GM13976 (cell line): ENCODE measurements at regions of chr20 and their contacts with region 1.

Region 1: DNA sequence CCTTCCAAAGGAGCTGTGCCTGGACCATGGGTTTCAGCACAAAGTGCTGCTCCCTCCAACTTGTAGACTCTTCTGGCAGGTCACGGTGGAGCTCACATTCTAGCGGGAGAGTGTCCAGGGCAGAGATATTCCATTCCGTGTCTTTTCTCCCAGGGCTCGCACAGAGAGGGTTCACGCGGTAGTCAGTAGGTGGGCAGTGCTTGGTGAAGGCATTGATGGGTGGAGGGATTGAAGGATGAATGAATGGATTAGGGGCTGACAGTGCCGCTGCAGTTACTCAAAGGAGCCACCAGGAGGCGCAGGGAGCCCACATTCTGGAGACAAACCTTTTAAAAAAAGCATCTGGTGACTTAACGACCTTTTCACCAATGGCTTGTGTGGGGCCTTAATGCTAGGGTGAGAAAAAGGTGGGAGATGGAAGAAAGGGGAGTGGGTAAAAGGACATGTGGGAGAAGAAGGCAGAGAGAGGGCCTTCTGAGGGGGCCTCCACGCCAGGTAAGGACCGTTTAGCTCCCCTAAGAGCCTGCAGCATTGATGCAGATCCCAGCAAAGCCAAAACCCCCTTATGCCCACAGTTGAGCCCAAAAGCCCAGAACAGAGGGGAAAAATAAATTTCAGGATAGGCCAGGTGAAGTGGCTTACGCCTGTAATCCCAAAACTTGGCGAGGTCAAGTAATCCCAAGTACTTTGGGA is 17.5 kb upstream of the FAM110A start:
- DNase-seq: peak; percentile 81
- CTCF ChIP-seq: peak; percentile 96

Region 2: DNA sequence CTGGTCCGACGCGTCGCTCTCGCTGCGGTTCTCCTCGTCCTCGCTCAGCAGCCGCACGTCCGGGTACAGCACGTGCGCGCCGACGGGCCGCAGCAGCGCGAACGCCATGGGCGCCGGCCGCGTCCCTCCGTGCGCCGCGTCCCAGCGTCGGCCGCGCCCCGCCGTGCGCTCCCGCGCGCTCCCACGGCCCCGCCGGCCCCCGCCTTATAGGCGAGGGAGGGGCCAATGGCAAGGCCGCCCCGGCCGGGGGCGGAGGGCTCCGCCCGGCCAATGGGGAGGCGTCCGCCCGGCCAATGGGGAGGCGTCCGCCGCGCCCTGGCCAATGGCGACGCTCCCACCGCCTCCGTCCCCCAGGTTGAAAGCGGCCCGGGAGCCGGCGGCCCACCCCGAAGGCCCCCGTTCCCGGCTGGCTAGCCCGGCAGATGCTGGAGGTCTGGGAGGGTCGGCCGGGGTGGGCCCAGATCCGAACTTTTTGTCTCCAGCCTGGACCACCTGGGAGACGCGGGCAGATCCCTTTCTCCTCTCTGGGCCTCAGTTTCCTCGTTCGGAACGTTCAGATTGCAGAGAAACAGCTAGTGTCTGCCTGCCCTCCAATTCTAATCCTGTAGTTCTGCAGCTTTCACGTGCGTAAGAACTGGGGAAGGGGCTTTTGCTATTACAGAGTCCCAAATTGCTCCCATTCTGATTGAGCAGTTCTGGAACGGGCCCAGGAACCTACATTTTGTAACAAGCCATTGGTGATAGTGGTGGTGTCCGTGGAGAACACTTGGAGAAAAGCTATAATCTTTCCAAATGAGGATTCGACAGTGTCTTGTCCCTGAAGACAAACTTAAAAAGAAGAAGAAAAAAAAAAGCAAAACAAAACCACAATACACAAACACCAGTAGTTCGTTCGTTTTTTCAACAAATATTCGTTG is 205.7 kb before region 1 on chr20 and contains the start of gene TCF15:
- in situ Hi-C with region 1: no loop called
- DNase-seq: peak; percentile 86
- CTCF ChIP-seq: no peak

Region 3: GRCh38 chr20:699811-700338 is 116.2 kb before region 1 on chr20:
- in situ Hi-C with region 1: no loop called
- DNase-seq: no peak
- CTCF ChIP-seq: no peak

Region 4: GRCh38 chr20:956330-956951 is 140.4 kb after region 1 on chr20:
- in situ Hi-C with region 1: loop called (anchors 5 kb)
- DNase-seq: peak; percentile 88
- CTCF ChIP-seq: peak; percentile 94

Region 5: DNA sequence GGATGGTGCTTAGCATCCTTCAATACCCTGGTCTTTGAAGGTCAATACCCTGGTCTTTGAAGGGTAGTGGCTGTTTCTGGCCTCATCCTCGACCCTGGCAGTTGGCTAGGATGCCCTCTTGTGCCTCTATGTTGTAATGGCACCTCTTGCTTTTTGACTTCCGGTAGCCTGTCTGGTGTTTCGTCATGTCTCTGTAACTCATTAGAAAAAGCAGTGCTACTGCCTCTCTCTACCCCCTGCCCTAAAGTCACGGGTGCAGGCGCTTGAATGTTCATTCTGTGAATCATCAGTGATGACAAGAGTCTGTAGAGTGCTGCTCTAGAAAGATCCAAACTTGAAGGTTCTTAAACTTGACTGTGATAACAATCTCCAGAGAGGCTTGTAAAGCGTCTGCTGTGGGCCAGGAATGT is 157.7 kb after region 1 on chr20:
- in situ Hi-C with region 1: no loop called
- DNase-seq: peak; percentile 74
- CTCF ChIP-seq: peak; percentile 42

Region 6: GRCh38 chr20:1185790-1186334 is 369.8 kb after region 1 on chr20:
- in situ Hi-C with region 1: loop called (anchors 25 kb)
- DNase-seq: peak; percentile 88
- CTCF ChIP-seq: peak; percentile 62